CD4-positive, alpha-beta memory T cell (primary cell): ENCODE measurements at regions of chr17 and their contacts with region 1.

Region 1: DNA sequence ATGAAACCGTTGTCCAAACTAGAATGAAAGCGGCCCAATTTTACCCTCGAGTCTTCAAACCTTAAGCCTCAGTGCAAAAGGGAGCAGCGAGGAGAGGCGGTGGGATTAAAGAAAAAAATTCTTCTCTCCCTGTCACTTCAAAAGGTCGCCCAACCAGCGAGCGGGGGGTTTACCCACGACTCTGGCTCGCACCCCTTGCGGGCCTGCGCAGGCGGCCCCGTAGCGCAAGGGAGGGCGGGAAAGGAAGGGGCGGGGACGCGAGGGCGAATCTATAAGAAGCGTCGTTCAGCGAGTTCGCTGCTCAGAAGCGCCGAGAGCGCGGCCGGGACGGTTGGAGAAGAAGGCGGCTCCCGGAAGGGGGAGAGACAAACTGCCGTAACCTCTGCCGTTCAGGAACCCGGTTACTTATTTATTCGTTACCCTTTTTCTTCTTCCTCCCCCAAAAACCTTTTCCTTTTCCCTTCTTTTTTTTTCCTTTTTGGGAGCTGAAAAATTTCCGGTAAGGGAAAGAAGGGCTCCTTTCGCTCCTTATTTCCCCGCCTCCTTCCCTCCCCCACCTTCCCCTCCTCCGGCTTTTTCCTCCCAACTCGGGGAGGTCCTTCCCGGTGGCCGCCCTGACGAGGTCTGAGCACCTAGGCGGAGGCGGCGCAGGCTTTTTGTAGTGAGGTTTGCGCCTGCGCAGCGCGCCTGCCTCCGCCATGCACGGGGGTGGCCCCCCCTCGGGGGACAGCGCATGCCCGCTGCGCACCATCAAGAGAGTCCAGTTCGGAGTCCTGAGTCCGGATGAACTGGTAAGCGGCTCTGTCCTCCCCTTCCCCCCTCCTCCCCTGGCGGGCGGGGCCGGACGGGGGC is at the start of gene POLR2A:
- DNase-seq: peak; percentile 97 to 99 (median 99)
- H3K4me3 ChIP-seq: peak within 1 kb of the TSS; percentile 92 to 95
- H3K4me3 Mint-ChIP-seq: peak within 1 kb of the TSS; percentile 96 to 100 (median 98)
- H3K27ac ChIP-seq: peak within 1 kb of the TSS; percentile 99
- H3K27ac Mint-ChIP-seq: peak within 1 kb of the TSS; percentile 99 to 100 (median 100)
- H3K4me1 ChIP-seq: peaks cover 59% of the 10 kb centered on the region
- H3K4me1 Mint-ChIP-seq: peaks cover 47 to 89% (median 65%) of the 10 kb centered on the region in 4 donors
- H3K27me3 ChIP-seq: no peaks in the 10 kb centered on the region
- H3K27me3 Mint-ChIP-seq: no peaks in the 10 kb centered on the region
- total RNA-seq, gene POLR2A: 178 to 191 TPM

Region 2: GRCh38 chr17:6212766-6213165 is 1271.5 kb before region 1 on chr17:
- CTCF ChIA-PET with region 1: no interaction called
- POLR2A ChIA-PET with region 1: no interaction called
- intact Hi-C with region 1: no loop called
- DNase-seq: no peak
- H3K4me3 ChIP-seq: no peak overlapping the region
- H3K4me3 Mint-ChIP-seq: no peak overlapping the region
- H3K27ac ChIP-seq: no peak overlapping the region
- H3K27ac Mint-ChIP-seq: no peak overlapping the region
- H3K4me1 ChIP-seq: no peaks in the 10 kb centered on the region
- H3K4me1 Mint-ChIP-seq: no peaks in the 10 kb centered on the region
- H3K27me3 ChIP-seq: no peaks in the 10 kb centered on the region
- H3K27me3 Mint-ChIP-seq: peaks cover 12 to 22% of the 10 kb centered on the region in 2 donors

Region 3: DNA sequence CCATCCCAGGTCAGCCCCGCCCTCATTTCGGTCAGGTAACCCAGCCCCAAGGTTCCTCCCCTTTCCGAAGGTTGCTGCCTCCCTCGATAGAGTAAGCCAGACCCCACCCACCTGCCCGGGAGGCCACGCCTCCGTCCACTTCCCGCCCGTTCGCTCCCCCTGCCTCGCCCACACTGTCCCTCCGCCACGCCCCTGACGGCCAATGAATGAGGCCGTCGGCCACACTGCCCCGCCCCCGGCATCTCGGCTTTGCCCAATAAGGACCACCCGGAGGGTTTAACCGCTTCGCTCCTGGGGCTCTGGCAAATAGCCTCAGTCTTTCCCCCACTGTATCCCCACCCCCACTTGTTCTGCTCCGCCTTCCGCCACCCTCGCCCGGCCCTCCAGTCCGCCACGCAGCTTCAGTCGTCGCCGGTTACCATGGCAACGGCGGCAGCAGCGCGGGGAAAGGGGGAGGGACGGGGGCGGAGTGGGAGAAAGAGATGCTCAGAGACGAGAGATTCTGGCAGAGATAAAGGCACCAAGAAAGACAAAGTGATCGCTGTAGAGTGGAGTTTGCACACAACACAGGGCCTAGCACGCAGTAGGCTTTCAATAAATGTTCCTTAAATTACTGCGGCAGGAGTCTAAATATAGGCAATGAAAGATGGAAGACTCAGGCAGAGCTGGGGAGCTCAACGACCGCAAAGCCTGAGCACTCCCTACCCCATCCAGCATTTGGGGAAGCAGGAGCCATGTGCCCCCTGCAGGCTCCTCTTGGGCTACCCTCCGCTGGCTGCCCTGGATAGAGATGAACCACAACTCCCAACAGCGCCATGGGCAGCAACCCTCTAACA is 269.8 kb before region 1 on chr17:
- CTCF ChIA-PET with region 1: no interaction called
- POLR2A ChIA-PET with region 1: interaction called, 8 read pairs
- intact Hi-C with region 1: loop called (anchors 1 kb)
- DNase-seq: peak; percentile 97 to 99 (median 98)
- H3K4me3 ChIP-seq: peak overlapping the region; percentile 68 to 73
- H3K4me3 Mint-ChIP-seq: peak overlapping the region; percentile 90 to 98 (median 93)
- H3K27ac ChIP-seq: peak overlapping the region; percentile 96
- H3K27ac Mint-ChIP-seq: peak overlapping the region; percentile 98 to 100 (median 100)
- H3K4me1 ChIP-seq: peaks cover 54% of the 10 kb centered on the region
- H3K4me1 Mint-ChIP-seq: peaks cover 26 to 67% (median 43%) of the 10 kb centered on the region in 4 donors
- H3K27me3 ChIP-seq: no peaks in the 10 kb centered on the region
- H3K27me3 Mint-ChIP-seq: peaks cover 0 to 13% of the 10 kb centered on the region in 2 donors

Region 4: DNA sequence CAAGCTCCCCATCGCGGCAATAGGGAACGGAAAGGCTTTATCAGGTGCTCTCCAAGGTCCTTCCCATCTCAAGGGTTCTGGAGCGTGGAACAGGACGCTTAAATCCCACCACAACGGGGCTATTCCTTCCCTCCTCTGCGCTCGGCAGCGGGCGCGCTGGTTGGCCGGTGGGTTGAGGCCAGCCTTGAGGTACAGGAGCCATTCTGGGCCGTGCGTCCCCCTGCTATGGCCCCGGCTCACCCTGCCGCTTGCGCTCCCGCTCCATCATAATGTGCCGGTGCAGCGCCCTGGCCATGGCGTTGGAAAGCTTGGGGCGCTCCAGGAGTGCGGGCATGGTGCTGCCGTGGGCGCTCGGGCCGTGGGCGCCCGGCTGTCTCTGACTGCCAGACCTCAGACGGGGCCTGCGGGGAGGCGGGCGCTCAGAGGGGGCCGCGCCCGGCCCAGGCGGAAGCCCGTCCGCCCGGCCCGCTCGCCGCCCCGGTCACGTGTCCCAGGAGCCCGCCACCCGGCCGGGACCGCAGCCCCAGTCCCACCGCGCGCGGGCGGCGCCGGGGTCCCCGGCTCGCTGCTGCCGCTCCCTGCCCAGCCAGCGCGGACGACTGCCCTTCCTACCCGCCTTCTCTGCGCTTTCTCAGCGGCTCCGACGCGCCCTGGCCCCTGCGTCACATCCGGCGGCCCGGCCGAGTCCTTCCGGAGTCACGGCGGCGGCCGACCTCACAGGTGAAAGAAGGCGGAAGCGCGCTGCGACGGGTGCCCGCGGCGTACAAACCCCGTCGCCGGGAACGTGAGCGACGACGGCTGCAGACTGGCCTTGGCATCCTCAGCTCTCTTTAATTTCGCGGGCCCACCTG is 169.3 kb before region 1 on chr17 and contains the start of gene GPS2:
- CTCF ChIA-PET with region 1: no interaction called
- POLR2A ChIA-PET with region 1: interaction called, 11 read pairs
- intact Hi-C with region 1: no loop called
- DNase-seq: peak; percentile 92 to 94 (median 93)
- H3K4me3 ChIP-seq: peak within 1 kb of the TSS; percentile 68 to 76
- H3K4me3 Mint-ChIP-seq: peak within 1 kb of the TSS; percentile 83 to 97 (median 92)
- H3K27ac ChIP-seq: peak within 1 kb of the TSS; percentile 83
- H3K27ac Mint-ChIP-seq: peak within 1 kb of the TSS; percentile 92 to 98 (median 96)
- H3K4me1 ChIP-seq: peaks cover 50% of the 10 kb centered on the region
- H3K4me1 Mint-ChIP-seq: peaks cover 29 to 64% (median 44%) of the 10 kb centered on the region in 4 donors
- H3K27me3 ChIP-seq: no peaks in the 10 kb centered on the region
- H3K27me3 Mint-ChIP-seq: no peaks in the 10 kb centered on the region
- total RNA-seq, gene GPS2: 127 to 132 TPM

Region 5: DNA sequence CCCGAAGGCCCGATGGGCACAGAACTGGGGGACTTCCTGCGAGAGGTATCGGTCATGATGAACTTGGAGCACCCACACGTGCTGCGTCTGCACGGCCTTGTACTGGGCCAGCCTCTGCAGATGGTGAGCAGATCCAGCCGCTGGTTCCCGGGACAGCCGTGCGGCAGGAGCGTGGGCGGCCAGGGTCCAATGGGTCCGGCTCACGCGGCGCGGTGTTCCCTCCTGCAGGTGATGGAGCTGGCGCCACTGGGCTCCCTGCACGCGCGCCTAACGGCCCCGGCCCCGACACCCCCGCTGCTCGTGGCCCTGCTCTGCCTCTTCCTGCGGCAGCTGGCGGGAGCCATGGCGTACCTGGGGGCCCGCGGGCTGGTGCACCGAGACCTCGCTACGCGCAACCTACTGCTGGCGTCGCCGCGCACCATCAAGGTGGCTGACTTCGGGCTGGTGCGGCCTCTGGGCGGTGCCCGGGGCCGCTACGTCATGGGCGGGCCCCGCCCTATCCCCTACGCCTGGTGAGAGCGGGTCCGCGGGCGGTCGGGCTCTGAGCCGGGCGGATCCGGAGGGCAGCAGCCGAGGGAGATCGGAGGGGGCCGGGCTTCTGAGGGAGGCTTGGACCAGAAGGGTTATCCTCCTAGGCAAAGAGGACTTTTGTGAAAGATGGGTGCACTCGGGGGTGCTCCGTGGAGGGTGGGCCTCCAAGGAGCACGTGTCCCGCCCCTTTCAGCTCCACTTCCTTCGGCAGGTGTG is 100.4 kb before region 1 on chr17:
- CTCF ChIA-PET with region 1: no interaction called
- POLR2A ChIA-PET with region 1: interaction called, 23 read pairs
- intact Hi-C with region 1: no loop called
- DNase-seq: peak; percentile 82 to 87 (median 84)
- H3K4me3 ChIP-seq: peak overlapping the region; percentile 42 to 86
- H3K4me3 Mint-ChIP-seq: peak overlapping the region; percentile 80 to 87 (median 82)
- H3K27ac ChIP-seq: peak overlapping the region; percentile 72
- H3K27ac Mint-ChIP-seq: peak overlapping the region; percentile 88 to 97 (median 94)
- H3K4me1 ChIP-seq: peaks cover 16% of the 10 kb centered on the region
- H3K4me1 Mint-ChIP-seq: peaks cover 8 to 28% (median 13%) of the 10 kb centered on the region in 4 donors
- H3K27me3 ChIP-seq: peaks cover 9% of the 10 kb centered on the region
- H3K27me3 Mint-ChIP-seq: peaks cover 28 to 32% of the 10 kb centered on the region in 2 donors

Region 6: GRCh38 chr17:7466639-7467341 is 17.5 kb before region 1 on chr17:
- CTCF ChIA-PET with region 1: no interaction called
- POLR2A ChIA-PET with region 1: interaction called, 398 read pairs
- intact Hi-C with region 1: no loop called
- DNase-seq: no peak
- H3K4me3 ChIP-seq: no peak overlapping the region
- H3K4me3 Mint-ChIP-seq: no peak overlapping the region
- H3K27ac ChIP-seq: no peak overlapping the region
- H3K27ac Mint-ChIP-seq: peak overlapping the region in 1 of 7 donors; percentile 40
- H3K4me1 ChIP-seq: peaks cover 8% of the 10 kb centered on the region
- H3K4me1 Mint-ChIP-seq: peaks cover 4 to 18% (median 6%) of the 10 kb centered on the region in 4 donors
- H3K27me3 ChIP-seq: no peaks in the 10 kb centered on the region
- H3K27me3 Mint-ChIP-seq: no peaks in the 10 kb centered on the region

Region 7: GRCh38 chr17:7561028-7561575 is 76.8 kb after region 1 on chr17:
- CTCF ChIA-PET with region 1: interaction called, 13 read pairs
- POLR2A ChIA-PET with region 1: interaction called, 20 read pairs
- intact Hi-C with region 1: no loop called
- DNase-seq: peak; percentile 75 to 85 (median 76)
- H3K4me3 ChIP-seq: peak overlapping the region; percentile 72 to 84
- H3K4me3 Mint-ChIP-seq: peak overlapping the region; percentile 89 to 98 (median 94)
- H3K27ac ChIP-seq: peak overlapping the region; percentile 96
- H3K27ac Mint-ChIP-seq: peak overlapping the region; percentile 95 to 99 (median 97)
- H3K4me1 ChIP-seq: peaks cover 37% of the 10 kb centered on the region
- H3K4me1 Mint-ChIP-seq: peaks cover 25 to 37% (median 30%) of the 10 kb centered on the region in 4 donors
- H3K27me3 ChIP-seq: no peaks in the 10 kb centered on the region
- H3K27me3 Mint-ChIP-seq: no peaks in the 10 kb centered on the region

Region 8: DNA sequence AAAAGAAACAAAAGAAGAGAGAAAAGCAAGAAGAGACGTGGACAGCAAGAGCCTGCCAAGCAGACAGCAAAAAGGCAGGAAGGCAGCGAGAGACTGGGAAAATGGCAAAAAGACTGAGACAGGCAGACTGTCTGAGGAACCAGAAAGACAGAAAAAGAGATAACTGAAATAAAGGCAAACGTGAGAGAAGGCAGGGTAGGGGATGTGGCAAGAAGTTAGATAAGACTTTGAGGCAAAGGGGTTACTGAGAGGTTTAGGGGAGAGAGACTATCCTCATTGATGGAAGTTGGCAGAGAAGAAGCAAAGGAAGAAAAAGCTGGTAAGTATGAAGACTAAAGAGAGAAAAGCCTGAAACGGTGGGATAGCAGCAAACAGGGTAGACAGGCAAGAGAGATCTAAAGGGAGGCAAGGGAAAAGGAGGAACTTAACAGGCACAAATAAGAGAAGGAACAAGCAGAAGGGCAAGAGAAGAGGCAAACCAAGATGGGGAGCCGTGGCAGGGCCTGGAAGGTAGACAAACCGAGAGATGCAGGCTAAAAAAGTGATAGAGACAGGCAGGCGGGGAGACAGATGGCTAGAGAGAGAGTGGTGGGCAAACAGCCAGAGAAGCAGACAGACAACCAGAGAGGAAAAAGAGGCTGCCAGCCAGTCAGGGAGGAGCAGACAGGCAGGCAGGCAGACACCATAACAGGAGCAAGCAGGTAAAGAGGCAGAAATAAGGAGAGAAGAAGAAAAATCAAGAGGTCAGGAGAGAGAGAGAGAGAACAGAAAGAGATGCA is 397.2 kb after region 1 on chr17:
- CTCF ChIA-PET with region 1: no interaction called
- POLR2A ChIA-PET with region 1: no interaction called
- intact Hi-C with region 1: no loop called
- DNase-seq: no peak
- H3K4me3 ChIP-seq: no peak overlapping the region
- H3K4me3 Mint-ChIP-seq: no peak overlapping the region
- H3K27ac ChIP-seq: no peak overlapping the region
- H3K27ac Mint-ChIP-seq: no peak overlapping the region
- H3K4me1 ChIP-seq: peaks cover 47% of the 10 kb centered on the region
- H3K4me1 Mint-ChIP-seq: peaks cover 4 to 11% (median 7%) of the 10 kb centered on the region in 4 donors
- H3K27me3 ChIP-seq: no peaks in the 10 kb centered on the region
- H3K27me3 Mint-ChIP-seq: no peaks in the 10 kb centered on the region